Transverse colon (tissue), 4 donors: ENCODE measurements at regions of chr13 and their contacts with region 1.

Region 1: DNA sequence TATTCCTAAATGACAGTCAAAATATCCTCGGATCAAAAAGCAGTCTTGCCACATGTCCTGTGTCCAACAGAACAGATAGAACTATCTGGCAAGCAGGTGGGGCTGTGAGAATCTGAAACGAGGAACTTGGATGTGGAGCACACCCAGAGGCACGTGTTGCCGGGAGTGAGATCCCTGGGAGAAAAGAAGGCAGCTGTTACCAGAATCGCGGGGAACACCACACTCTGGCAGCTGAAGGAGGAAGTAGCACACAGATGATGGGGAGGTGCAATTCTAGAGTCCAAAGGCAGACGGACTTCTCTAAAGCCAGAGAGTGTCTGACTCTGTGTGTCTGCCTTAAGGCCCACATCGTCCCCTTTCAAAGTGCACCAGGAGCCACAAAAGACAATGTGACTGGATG is 22.3 kb downstream of the SLC7A1 start:
- DNase-seq: peak; percentile 78
- H3K4me3 ChIP-seq: no peak overlapping the region
- H3K27ac ChIP-seq: peak overlapping the region; percentile 52 to 73 (median 72)
- H3K4me1 ChIP-seq: peaks cover 14 to 34% (median 21%) of the 10 kb centered on the region in 4 donors
- H3K27me3 ChIP-seq: no peaks in the 10 kb centered on the region
- CTCF ChIP-seq: peak in 1 of 5 experiments; percentile 6
- EP300 ChIP-seq: no peak
- POLR2A ChIP-seq: no peak

Region 2: GRCh38 chr13:29707876-29708543 is 134.8 kb after region 1 on chr13:
- in situ Hi-C with region 1: no loop called
- intact Hi-C with region 1: no loop called
- DNase-seq: peak; percentile 48
- H3K4me3 ChIP-seq: no peak overlapping the region
- H3K27ac ChIP-seq: no peak overlapping the region
- H3K4me1 ChIP-seq: no peaks in the 10 kb centered on the region
- H3K27me3 ChIP-seq: peaks cover 9% of the 10 kb centered on the region
- CTCF ChIP-seq: peak; percentile 38 to 62 (median 52)
- EP300 ChIP-seq: no peak
- POLR2A ChIP-seq: no peak

Region 3: GRCh38 chr13:30276178-30276577 is 703.0 kb after region 1 on chr13:
- in situ Hi-C with region 1: no loop called
- intact Hi-C with region 1: loop called (anchors 10 kb)
- DNase-seq: no peak
- H3K4me3 ChIP-seq: no peak overlapping the region
- H3K27ac ChIP-seq: no peak overlapping the region
- H3K4me1 ChIP-seq: no peaks in the 10 kb centered on the region
- H3K27me3 ChIP-seq: no peaks in the 10 kb centered on the region
- CTCF ChIP-seq: no peak
- EP300 ChIP-seq: no peak
- POLR2A ChIP-seq: no peak